ENCODE measurements at regions of chr11 and their contacts with region 1.

Region 1: GRCh38 chr11:123246749-123247495 is 51.9 kb upstream of the CLMP start:
- DNase-seq: peak; percentile 89 to 92 (median 90)
- H3K4me3 ChIP-seq: peak overlapping the region in 1 of 3 donors; percentile 4
- H3K27ac ChIP-seq: no peak overlapping the region
- H3K4me1 ChIP-seq: no peaks in the 10 kb centered on the region
- H3K27me3 ChIP-seq: no peaks in the 10 kb centered on the region
- CTCF ChIP-seq: peak; percentile 92

Region 2: DNA sequence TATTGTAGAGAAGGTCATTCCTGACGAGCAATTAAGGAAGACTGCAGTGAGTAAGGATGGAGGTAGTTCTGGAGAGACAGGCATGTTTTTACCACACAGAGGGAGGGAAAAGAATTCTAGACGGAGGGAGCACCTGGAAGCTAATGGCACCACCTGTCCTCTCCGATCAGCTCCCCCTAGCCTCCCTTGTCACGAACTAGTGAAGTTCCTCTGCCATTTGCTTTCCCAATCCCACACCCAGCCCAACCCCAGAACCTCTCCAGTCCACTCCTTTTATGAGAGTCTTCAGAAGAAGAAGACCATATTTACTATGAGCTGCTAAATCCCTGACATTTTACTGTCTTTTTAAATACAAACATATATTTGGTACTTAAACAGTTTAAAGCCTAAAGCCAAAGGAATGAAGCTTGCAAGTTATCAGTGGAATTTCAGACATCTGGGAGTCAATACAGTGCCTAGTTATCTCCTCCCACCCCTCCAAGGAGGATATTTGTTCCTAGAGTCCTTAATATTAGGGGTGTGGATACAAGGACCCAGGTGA is 138.9 kb before region 1 on chr11:
- intact Hi-C with region 1: loop called (anchors 5 kb)
- DNase-seq: no peak
- H3K4me3 ChIP-seq: no peak overlapping the region
- H3K27ac ChIP-seq: no peak overlapping the region
- H3K4me1 ChIP-seq: no peaks in the 10 kb centered on the region
- H3K27me3 ChIP-seq: no peaks in the 10 kb centered on the region
- CTCF ChIP-seq: no peak

Region 3: DNA sequence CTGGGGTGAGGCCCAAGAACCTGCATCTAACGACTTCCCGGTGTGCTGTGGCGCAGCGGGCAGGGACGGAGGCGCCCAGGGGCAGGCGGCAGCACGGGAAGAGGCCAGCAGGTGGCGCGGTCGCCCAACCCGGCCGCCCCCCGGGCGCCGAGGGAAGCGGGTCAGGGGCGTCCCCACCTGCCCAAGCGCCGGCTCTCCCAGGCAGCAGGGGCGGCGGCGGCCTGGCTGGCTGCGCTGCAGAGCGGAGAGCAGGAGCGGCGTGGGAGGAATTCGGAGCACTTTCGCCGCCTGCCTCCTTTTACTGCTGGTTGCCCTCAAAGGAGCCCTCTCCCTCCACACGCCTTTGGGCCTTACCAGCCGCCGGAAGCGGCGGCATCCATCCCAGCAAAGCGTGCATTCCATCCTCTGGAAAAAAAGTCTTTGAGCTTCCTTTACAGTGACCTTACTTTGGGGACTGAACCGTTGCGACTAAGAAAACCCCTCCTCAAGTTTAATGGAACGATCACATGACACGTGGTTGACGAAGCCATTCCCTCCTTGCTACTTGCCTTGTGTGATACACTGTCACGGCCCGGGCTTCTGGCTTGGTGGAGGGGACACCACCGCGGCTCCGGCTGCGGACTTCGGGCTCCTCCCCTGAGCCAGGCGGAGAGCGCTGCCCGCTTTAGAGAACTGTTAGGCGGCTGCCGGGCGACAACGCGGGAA is 54.9 kb after region 1 on chr11:
- intact Hi-C with region 1: no loop called
- DNase-seq: peak; percentile 84 to 93 (median 89)
- H3K4me3 ChIP-seq: peak overlapping the region; percentile 46 to 60 (median 53)
- H3K27ac ChIP-seq: no peak overlapping the region
- H3K4me1 ChIP-seq: peaks cover 0 to 8% (median 0%) of the 10 kb centered on the region in 3 donors
- H3K27me3 ChIP-seq: no peaks in the 10 kb centered on the region
- CTCF ChIP-seq: peak; percentile 73

Region 4: GRCh38 chr11:123413636-123414035 is 166.7 kb after region 1 on chr11:
- intact Hi-C with region 1: no loop called
- DNase-seq: no peak
- H3K4me3 ChIP-seq: no peak overlapping the region
- H3K27ac ChIP-seq: no peak overlapping the region
- H3K4me1 ChIP-seq: peaks cover 0 to under 1% (median under 1%) of the 10 kb centered on the region in 3 donors
- H3K27me3 ChIP-seq: no peaks in the 10 kb centered on the region
- CTCF ChIP-seq: no peak

Measured in kidney (tissue), 22 donors.